ENCODE measurements at regions of chr9 and their contacts with region 1.

Region 1: DNA sequence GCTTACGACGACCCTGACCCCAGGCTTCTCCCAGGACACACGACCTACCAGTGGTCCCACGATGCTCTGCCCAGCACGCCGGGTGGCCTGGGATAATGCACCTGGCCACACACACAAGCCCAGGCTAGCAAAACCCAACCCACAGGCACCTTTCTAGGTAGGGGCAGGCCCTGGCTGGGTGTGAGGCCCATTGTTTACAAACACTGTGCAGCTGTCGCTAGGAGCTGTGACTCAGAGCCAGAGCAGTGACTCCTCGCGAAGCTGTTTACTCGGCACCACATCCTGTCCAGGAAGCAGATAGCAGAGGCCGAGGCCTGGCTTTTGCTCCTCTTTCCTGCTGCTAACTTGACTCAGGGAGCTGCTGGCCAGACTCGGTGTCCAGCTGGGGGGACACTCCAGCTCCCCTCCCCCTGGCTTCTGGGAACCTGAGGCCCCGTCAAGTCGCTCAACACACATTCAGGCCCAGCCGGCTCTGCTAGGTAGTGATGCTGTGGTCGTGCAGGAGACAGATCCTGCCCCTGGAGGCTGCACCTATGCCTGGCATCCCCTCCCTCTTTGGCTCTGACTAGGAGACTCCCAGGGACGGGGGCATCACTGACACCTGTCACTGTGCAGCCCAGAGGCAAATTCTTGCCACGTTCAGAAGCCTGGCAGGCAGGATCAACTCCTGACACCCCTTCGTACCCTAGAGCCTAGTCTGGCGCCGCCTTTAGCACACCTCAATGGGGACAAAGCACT is 12.8 kb upstream of the RALGDS start:
- DNase-seq: peak; percentile 94
- ATAC-seq: peak; percentile 81
- H3K4me3 Mint-ChIP-seq: peak overlapping the region; percentile 47
- H3K27ac Mint-ChIP-seq: peak overlapping the region; percentile 93
- H3K4me1 Mint-ChIP-seq: peaks cover 72% of the 10 kb centered on the region
- H3K27me3 Mint-ChIP-seq: no peaks in the 10 kb centered on the region
- CTCF ChIP-seq: no peak

Region 2: GRCh38 chr9:133115448-133116345 is 18.2 kb before region 1 on chr9:
- CTCF ChIA-PET with region 1: interaction called, 4 read pairs
- POLR2A ChIA-PET with region 1: interaction called, 11 read pairs
- intact Hi-C with region 1: no loop called
- DNase-seq: peak; percentile 91
- ATAC-seq: peak; percentile 90
- H3K4me3 Mint-ChIP-seq: peak overlapping the region; percentile 55
- H3K27ac Mint-ChIP-seq: peak overlapping the region; percentile 85
- H3K4me1 Mint-ChIP-seq: peaks cover 64% of the 10 kb centered on the region
- H3K27me3 Mint-ChIP-seq: no peaks in the 10 kb centered on the region
- CTCF ChIP-seq: no peak

Measured in activated CD8-positive, alpha-beta T cell treated with anti-CD3 and anti-CD28 coated beads for 36 hours (primary cell).